K562 (cell line): ENCODE measurements at regions of chr2 and their contacts with region 1.

Region 1: GRCh38 chr2:70977605-70978205 is 725 bp upstream of the ANKRD53 start:
- DNase-seq: no peak
- ATAC-seq: no peak
- H3K4me3 ChIP-seq: peak overlapping the region; percentile 45; the same call in 1 of the 2 replicates
- H3K27ac ChIP-seq: no peak overlapping the region
- H3K4me1 ChIP-seq: peaks cover 6 to 19% of the 10 kb centered on the region in 2 experiments; a peak in 4 of 5 replicates
- H3K27me3 ChIP-seq: no peaks in the 10 kb centered on the region
- CTCF ChIP-seq: peak in 1 of 3 experiments; percentile 2; a peak in 1 of 6 replicates
- EP300 ChIP-seq: no peak
- POLR2A ChIP-seq: no peak
- RAD21 ChIP-seq: no peak

Region 2: DNA sequence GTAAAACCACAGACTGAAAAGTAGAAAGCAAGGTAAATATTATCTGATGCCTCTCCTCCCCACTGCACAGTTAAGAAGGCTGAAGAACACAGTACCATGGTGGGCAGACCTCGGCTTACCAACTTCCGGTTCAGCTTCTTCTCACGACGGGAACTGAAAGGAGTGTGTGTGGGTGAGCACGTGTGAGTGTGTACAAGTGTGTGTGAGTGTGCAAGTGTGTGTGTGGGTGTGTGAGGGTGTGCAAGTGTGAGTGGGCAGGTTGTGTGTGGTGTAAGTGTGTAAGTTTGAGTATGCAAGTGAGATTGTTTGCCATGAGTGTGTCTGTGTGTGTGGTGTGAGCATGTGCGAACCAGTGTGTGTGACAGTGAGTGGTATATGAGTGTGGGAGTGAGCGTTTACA is 313.2 kb before region 1 on chr2:
- CTCF ChIA-PET with region 1: no interaction called
- POLR2A ChIA-PET with region 1: no interaction called
- in situ Hi-C with region 1: no loop called
- intact Hi-C with region 1: no loop called
- DNase-seq: no peak
- ATAC-seq: no peak
- H3K4me3 ChIP-seq: no peak overlapping the region
- H3K27ac ChIP-seq: no peak overlapping the region
- H3K4me1 ChIP-seq: no peaks in the 10 kb centered on the region
- H3K27me3 ChIP-seq: no peaks in the 10 kb centered on the region
- CTCF ChIP-seq: no peak
- EP300 ChIP-seq: no peak
- POLR2A ChIP-seq: no peak
- RAD21 ChIP-seq: no peak

Region 3: DNA sequence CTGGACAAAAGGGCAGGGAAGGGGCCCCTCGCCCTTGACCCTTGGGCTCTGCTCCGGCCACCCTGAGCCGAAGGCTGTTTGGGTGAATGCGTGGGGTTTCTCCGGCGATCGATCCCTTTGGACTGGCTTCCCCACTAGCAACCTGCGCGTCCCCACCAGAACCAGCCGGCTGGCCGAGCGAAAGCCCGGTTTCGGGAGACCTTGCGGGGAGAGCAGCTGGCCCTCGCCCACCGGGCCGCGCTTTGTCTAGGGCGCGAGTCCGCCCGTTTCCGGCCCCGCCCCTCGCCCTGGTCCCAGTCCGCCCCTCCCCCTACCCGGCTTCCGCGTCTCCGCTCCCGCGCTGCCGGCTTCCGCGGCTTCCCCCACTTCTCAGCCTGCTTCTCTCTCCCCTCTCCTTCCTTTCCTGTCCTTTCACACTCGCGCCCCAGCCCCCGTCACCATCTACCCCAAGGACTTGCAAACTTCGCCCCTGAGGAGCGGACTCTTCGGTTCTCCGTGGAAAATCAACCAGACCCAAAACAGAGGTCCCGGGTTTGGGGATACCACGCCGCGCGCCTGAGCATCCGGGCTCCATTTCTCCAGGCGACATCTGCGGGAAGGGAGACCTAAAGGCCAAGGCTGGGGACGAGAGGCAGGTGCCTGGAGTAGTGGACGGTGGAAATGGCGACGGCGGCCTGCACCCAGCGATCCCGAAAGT is 90.0 kb before region 1 on chr2:
- CTCF ChIA-PET with region 1: no interaction called
- POLR2A ChIA-PET with region 1: no interaction called
- in situ Hi-C with region 1: no loop called
- intact Hi-C with region 1: no loop called
- DNase-seq: peak in 2 of 4 experiments; percentile 42
- ATAC-seq: no peak
- H3K4me3 ChIP-seq: no peak overlapping the region
- H3K27ac ChIP-seq: no peak overlapping the region
- H3K4me1 ChIP-seq: peaks cover 0 to 8% of the 10 kb centered on the region in 2 experiments; a peak in 1 of 5 replicates
- H3K27me3 ChIP-seq: peaks cover 21 to 49% of the 10 kb centered on the region in 2 experiments; a peak in 4 of 5 replicates
- CTCF ChIP-seq: no peak
- EP300 ChIP-seq: no peak
- POLR2A ChIP-seq: no peak
- RAD21 ChIP-seq: no peak

Region 4: GRCh38 chr2:70923378-70924015 is 54.2 kb before region 1 on chr2:
- CTCF ChIA-PET with region 1: no interaction called
- POLR2A ChIA-PET with region 1: no interaction called
- in situ Hi-C with region 1: no loop called
- intact Hi-C with region 1: no loop called
- DNase-seq: peak in 3 of 4 experiments; percentile 26 to 44 (median 36)
- ATAC-seq: peak; percentile 79
- H3K4me3 ChIP-seq: no peak overlapping the region
- H3K27ac ChIP-seq: no peak overlapping the region
- H3K4me1 ChIP-seq: peaks cover 0 to 3% of the 10 kb centered on the region in 2 experiments; a peak in 1 of 5 replicates
- H3K27me3 ChIP-seq: peaks cover 12 to 41% of the 10 kb centered on the region in 2 experiments; a peak in 3 of 5 replicates
- CTCF ChIP-seq: peak; percentile 34 to 48 (median 46); a peak in 5 of 6 replicates
- EP300 ChIP-seq: no peak
- POLR2A ChIP-seq: no peak
- RAD21 ChIP-seq: no peak

Region 5: DNA sequence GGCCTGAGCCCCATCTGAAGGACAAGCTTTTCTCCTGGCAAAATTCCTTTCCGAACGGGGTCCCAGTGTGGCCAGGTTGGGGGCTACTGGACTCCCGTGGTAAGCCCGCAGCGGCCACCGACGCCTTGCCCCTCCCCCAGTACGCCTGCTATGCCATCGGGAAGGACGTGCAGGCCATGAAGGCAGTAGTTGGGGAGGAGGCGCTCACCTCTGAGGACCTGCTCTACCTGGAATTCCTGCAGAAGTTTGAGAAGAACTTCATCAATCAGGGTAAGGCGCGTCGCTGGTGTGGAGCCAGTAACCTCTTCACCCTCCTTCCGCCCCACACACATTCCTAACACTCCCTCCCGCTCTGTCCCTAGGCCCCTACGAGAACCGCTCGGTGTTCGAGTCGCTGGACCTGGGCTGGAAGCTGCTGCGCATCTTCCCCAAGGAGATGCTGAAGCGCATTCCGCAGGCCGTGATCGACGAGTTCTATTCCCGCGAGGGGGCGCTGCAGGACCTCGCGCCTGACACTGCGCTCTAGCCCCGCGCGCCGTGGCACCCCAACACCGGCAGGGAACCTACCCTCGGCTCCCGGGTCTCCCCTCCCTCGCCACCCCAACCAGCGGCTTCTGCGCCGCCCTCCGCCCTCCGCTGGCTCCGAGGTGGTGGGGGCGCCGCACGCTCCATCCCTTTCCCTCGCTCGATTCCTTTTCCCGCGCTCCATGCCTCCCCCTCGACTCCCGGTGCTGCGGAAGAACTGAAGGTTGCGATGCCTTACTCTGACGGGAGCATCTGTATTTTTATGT is 12.9 kb before region 1 on chr2:
- CTCF ChIA-PET with region 1: interaction called, 13 read pairs
- POLR2A ChIA-PET with region 1: interaction called, 4 read pairs
- in situ Hi-C with region 1: no loop called
- intact Hi-C with region 1: loop called (anchors 1 kb)
- DNase-seq: peak; percentile 71 to 88 (median 74)
- ATAC-seq: peak; percentile 94
- H3K4me3 ChIP-seq: peak overlapping the region; percentile 47
- H3K27ac ChIP-seq: no peak overlapping the region
- H3K4me1 ChIP-seq: peaks cover 0 to 14% of the 10 kb centered on the region in 2 experiments; a peak in 3 of 5 replicates
- H3K27me3 ChIP-seq: peaks cover 0 to 41% of the 10 kb centered on the region in 2 experiments; a peak in 2 of 5 replicates
- CTCF ChIP-seq: peak; percentile 88 to 92 (median 91)
- EP300 ChIP-seq: no peak
- POLR2A ChIP-seq: no peak
- RAD21 ChIP-seq: peak; percentile 67 to 84